Ascending aorta (tissue), 2 donors: ENCODE measurements at regions of chr1 and their contacts with region 1.

Region 1: GRCh38 chr1:85406887-85407533 is 57.9 kb downstream of the DDAH1 start:
- DNase-seq: peak in 1 of 2 donors; percentile 75
- H3K4me3 ChIP-seq: no peak overlapping the region
- H3K27ac ChIP-seq: peak overlapping the region; percentile 73 to 85
- H3K4me1 ChIP-seq: peaks cover 7 to 30% of the 10 kb centered on the region in 2 donors
- H3K27me3 ChIP-seq: no peaks in the 10 kb centered on the region
- CTCF ChIP-seq: no peak

Region 2: GRCh38 chr1:85276215-85276977 is 130.6 kb before region 1 on chr1 and contains the start of gene BCL10:
- intact Hi-C with region 1: no loop called
- DNase-seq: peak; percentile 95 to 99
- H3K4me3 ChIP-seq: peak within 1 kb of the TSS; percentile 75 to 82
- H3K27ac ChIP-seq: peak within 1 kb of the TSS; percentile 93 to 97
- H3K4me1 ChIP-seq: peaks cover 8 to 17% of the 10 kb centered on the region in 2 donors
- H3K27me3 ChIP-seq: no peaks in the 10 kb centered on the region
- CTCF ChIP-seq: no peak
- total RNA-seq, gene BCL10: 3.7 TPM

Region 3: DNA sequence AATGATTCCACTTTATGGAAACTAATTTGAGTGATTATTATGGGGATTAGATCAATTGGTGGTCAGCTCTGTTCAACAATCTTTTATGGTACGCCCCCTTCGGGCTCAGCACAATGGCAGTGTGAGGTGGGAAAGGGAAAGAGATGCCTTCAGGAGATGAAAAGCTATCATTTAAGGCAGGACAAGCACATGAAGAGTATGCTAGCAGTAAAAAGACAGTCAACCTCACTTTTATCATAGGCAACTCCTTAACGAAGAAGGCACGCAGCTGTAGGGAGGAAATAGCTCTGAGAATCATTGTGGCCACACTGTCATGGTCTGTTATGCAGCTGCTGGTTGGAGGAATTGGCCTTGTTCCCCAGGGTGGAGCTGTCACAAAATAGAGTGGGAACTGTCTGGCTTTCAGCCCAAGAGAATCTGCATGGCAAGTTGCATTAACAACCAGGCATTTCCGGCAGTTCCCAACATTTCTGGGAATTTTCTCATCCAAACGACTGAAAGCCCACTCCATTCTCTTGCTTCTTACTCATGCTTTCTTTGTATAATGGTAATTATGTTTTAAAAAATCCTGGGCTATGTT is 76.2 kb before region 1 on chr1:
- intact Hi-C with region 1: loop called (anchors 5 kb)
- DNase-seq: peak in 1 of 2 donors; percentile 83
- H3K4me3 ChIP-seq: no peak overlapping the region
- H3K27ac ChIP-seq: peak overlapping the region; percentile 75 to 84
- H3K4me1 ChIP-seq: peaks cover 11 to 33% of the 10 kb centered on the region in 2 donors
- H3K27me3 ChIP-seq: no peaks in the 10 kb centered on the region
- CTCF ChIP-seq: no peak

Region 4: DNA sequence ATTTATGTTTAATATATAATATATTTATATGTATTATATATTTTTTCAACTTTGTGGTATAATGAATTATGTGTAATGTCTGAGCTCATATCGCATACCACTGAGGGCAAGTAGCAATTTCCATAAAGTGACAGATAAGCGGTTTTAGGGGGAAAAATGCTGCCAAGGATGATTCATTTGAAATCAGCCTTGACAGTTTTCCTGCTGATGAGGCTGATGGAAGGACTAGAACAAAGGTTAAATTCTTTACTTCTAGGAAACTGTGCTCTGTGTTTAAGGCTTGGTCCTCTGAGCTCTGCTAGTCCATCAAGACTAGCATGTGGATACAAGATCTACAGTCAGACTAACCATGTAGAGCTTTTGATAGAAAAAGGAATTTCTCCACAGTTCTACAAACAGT is 77.3 kb after region 1 on chr1:
- intact Hi-C with region 1: no loop called
- DNase-seq: no peak
- H3K4me3 ChIP-seq: no peak overlapping the region
- H3K27ac ChIP-seq: no peak overlapping the region
- H3K4me1 ChIP-seq: no peaks in the 10 kb centered on the region
- H3K27me3 ChIP-seq: no peaks in the 10 kb centered on the region
- CTCF ChIP-seq: no peak

Region 5: DNA sequence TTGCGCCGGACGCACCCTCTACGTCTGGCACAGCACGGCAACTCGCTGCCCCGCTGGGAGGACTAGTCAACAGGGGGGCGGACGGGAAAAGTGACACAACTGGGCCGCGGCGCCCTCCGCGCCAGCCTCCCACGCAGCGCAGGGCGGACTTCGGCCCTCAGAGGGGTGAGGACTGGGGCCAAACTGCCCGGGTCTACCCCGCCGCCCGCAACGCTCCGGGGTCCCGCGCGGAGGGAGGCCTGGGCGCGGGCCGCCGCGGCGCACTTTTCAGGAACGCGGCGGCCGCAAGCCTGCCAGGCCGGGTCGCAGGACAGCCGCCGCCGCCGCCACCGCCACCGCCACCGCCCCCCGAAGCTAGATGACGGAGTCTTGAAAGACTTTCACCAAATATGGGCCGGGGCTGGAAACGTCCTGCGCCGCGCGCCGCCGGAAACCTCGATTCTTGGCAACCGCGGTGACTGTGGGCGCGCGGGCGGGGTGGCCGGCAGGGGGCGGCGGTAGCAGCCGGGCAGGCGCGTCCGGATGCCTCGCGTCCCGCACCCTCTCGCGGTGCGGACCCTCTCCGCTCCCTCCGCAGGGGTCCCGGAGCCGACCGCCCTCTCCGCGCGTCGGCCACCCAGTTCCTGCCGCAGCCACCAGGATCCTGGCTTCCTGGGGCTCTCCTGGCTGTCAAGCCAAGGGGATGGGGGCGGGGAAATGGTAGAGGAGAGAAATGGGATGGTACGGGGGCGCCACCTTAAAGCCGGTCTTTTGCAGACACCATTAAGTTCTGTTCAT is 169.8 kb after region 1 on chr1:
- intact Hi-C with region 1: loop called (anchors 5 kb)
- DNase-seq: peak; percentile 57 to 96
- H3K4me3 ChIP-seq: peak overlapping the region; percentile 62 to 88
- H3K27ac ChIP-seq: peak overlapping the region; percentile 92 to 96
- H3K4me1 ChIP-seq: peaks cover 5 to 23% of the 10 kb centered on the region in 2 donors
- H3K27me3 ChIP-seq: no peaks in the 10 kb centered on the region
- CTCF ChIP-seq: peak; percentile 59 to 93 (median 67)

Region 6: GRCh38 chr1:85587841-85588240 is 180.8 kb after region 1 on chr1:
- intact Hi-C with region 1: no loop called
- DNase-seq: no peak
- H3K4me3 ChIP-seq: no peak overlapping the region
- H3K27ac ChIP-seq: no peak overlapping the region
- H3K4me1 ChIP-seq: no peaks in the 10 kb centered on the region
- H3K27me3 ChIP-seq: no peaks in the 10 kb centered on the region
- CTCF ChIP-seq: no peak